Heart right ventricle (tissue), 16 donors: ENCODE measurements at regions of chr7 and their contacts with region 1.

Region 1: DNA sequence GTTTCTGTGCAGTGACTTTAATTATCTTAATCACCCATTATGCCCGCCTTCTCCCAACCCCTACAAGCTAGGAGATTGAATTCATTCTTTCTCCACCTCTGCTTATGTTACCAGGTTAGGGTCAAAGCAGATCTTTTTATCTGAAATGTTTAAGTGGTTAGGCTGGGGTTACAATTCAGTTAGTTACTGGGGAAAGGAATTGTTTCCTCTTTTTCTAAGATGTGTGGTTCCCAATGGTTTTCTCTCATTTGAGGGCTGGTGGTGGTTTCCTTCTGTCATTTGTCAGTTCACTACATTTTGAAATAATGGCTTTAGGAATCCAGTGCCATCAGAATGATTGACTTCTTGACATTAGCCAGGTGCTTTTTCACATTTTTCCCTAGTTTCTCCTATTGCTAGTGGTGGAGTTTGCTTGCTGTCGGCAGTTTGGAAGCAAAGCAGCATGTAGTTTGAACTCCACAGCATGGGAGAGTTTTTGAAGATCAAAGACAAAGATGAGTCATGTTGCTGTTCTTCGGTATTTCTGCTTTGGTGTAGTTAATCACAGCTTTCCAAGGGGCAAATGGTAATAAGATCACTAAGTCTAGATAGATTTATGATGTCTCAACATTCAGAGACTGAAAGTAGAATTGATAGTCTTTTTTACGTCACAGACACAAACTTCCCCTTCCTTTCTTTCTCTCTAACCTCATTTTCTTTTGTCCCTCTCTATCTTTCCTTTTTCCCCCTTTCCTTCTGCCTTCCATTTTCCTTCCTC is 168.2 kb downstream of the SND1 start:
- DNase-seq: no peak
- ATAC-seq: no peak
- H3K4me3 ChIP-seq: no peak overlapping the region
- H3K27ac ChIP-seq: peak overlapping the region in 1 of 10 donors; percentile 6
- H3K4me1 ChIP-seq: peaks cover 0 to 22% (median 0%) of the 10 kb centered on the region in 9 donors
- H3K27me3 ChIP-seq: no peaks in the 10 kb centered on the region
- CTCF ChIP-seq: no peak

Region 2: GRCh38 chr7:127029823-127030222 is 790.3 kb before region 1 on chr7:
- intact Hi-C with region 1: no loop called
- DNase-seq: no peak
- ATAC-seq: no peak
- H3K4me3 ChIP-seq: no peak overlapping the region
- H3K27ac ChIP-seq: no peak overlapping the region
- H3K4me1 ChIP-seq: no peaks in the 10 kb centered on the region
- H3K27me3 ChIP-seq: peaks cover 0 to 3% (median 0%) of the 10 kb centered on the region in 7 donors
- CTCF ChIP-seq: no peak

Region 3: GRCh38 chr7:127870231-127870907 is 50.2 kb after region 1 on chr7:
- intact Hi-C with region 1: loop called in 1 of 10 experiments (anchors 5 kb)
- DNase-seq: no peak
- ATAC-seq: no peak
- H3K4me3 ChIP-seq: no peak overlapping the region
- H3K27ac ChIP-seq: no peak overlapping the region
- H3K4me1 ChIP-seq: peaks cover 0 to 14% (median 2%) of the 10 kb centered on the region in 9 donors
- H3K27me3 ChIP-seq: no peaks in the 10 kb centered on the region
- CTCF ChIP-seq: no peak

Region 4: GRCh38 chr7:128904381-128905197 is 1084.4 kb after region 1 on chr7:
- intact Hi-C with region 1: no loop called
- DNase-seq: no peak
- ATAC-seq: peak in 5 of 8 donors; percentile 16 to 60 (median 25)
- H3K4me3 ChIP-seq: no peak overlapping the region
- H3K27ac ChIP-seq: no peak overlapping the region
- H3K4me1 ChIP-seq: peaks cover 0 to 3% (median 2%) of the 10 kb centered on the region in 9 donors
- H3K27me3 ChIP-seq: peaks cover 0 to 50% (median 31%) of the 10 kb centered on the region in 7 donors
- CTCF ChIP-seq: peak; percentile 5 to 67 (median 58)